OCI-LY7 (cell line): ENCODE measurements at regions of chr3 and their contacts with region 1.

Region 1: GRCh38 chr3:183427876-183428446 is 458 bp downstream of the MCF2L2 start:
- DNase-seq: peak; percentile 70
- H3K4me3 ChIP-seq: peak overlapping the region; percentile 71
- H3K27ac ChIP-seq: peak overlapping the region; percentile 7
- H3K4me1 ChIP-seq: peaks cover 15% of the 10 kb centered on the region
- CTCF ChIP-seq: no peak

Region 2: GRCh38 chr3:182450942-182451787 is 976.8 kb before region 1 on chr3:
- CTCF ChIA-PET with region 1: no interaction called
- POLR2A ChIA-PET with region 1: no interaction called
- intact Hi-C with region 1: no loop called
- DNase-seq: no peak
- H3K4me3 ChIP-seq: no peak overlapping the region
- H3K27ac ChIP-seq: no peak overlapping the region
- H3K4me1 ChIP-seq: peaks cover 9% of the 10 kb centered on the region
- CTCF ChIP-seq: no peak

Region 3: DNA sequence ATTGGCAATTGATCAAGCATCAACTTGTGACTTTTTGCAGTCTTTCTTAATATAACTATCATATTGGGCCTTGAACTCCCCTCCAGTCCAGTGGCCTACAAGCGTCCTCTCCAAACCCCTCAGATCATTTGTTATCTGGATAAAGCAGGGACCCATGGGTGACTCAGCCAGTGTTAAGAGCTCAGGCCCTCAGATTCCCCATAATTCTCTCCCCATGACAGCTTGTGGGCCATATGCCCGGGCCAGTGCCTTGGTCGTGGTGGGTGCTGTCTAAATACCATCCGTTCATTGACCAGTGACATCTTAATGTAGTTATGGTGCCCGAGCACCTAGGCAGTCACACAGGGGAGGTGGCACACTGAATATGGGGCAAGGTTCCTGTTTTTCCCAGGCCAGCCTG is 17.7 kb before region 1 on chr3:
- CTCF ChIA-PET with region 1: interaction called, 8 read pairs
- POLR2A ChIA-PET with region 1: interaction called, 13 read pairs
- intact Hi-C with region 1: no loop called
- DNase-seq: no peak
- H3K4me3 ChIP-seq: no peak overlapping the region
- H3K27ac ChIP-seq: no peak overlapping the region
- H3K4me1 ChIP-seq: no peaks in the 10 kb centered on the region
- CTCF ChIP-seq: no peak

Region 4: GRCh38 chr3:183537295-183537730 is 109.4 kb after region 1 on chr3:
- CTCF ChIA-PET with region 1: no interaction called
- POLR2A ChIA-PET with region 1: no interaction called
- intact Hi-C with region 1: no loop called
- DNase-seq: no peak
- H3K4me3 ChIP-seq: peak overlapping the region; percentile 57
- H3K27ac ChIP-seq: peak overlapping the region; percentile 74
- H3K4me1 ChIP-seq: peaks cover 98% of the 10 kb centered on the region
- CTCF ChIP-seq: no peak

Region 5: DNA sequence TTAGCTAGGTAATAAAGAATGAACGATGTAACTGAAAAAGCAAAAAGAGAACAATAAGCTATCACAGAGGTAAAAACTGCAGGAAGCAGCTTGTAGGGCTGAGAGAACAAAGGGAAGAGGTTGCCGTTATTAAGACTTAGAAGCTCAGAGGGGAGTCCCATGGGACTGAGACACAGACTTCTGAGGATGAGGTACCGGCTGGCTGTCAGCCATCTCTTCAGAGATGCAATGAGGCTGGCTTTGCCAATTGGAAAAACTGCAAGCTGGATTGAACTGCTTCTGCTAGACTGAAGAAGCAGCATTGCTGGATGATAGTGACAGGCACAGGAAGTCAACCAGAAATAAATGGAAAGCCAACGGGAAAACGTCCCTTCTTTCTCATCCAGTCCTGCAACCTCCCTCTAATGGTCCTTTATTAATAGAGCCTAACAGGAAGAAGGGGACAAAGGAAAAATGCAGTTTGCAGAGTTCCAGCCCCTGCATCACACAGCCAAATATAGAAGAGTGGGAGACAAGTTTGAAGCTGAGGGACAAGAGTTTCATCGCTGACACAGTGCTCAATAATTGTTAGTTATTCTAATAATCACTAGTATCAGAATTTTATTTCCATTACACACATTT is 148.6 kb after region 1 on chr3:
- CTCF ChIA-PET with region 1: no interaction called
- POLR2A ChIA-PET with region 1: no interaction called
- intact Hi-C with region 1: no loop called
- DNase-seq: peak; percentile 97
- H3K4me3 ChIP-seq: peak overlapping the region; percentile 47
- H3K27ac ChIP-seq: peak overlapping the region; percentile 94
- H3K4me1 ChIP-seq: peaks cover 96% of the 10 kb centered on the region
- CTCF ChIP-seq: no peak

Region 6: DNA sequence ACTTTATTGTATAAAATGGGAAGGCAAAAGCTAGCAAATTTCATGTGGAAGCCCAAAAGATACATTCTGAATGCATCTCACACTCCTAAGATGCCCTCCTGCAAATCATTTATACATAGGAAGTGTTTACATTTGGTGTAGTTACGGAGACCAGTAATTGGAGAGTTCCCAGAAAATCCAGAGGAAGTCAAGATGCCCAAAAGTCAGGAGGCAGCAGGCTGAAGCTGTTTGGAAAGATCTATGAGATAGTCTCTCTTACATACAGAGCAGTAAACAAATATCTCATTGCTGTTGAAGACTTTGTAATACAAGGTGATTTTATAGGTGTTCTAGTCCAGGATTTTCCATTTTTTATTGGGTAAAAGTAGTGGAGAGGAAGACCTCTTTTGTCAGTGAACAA is 216.3 kb after region 1 on chr3:
- CTCF ChIA-PET with region 1: interaction called, 14 read pairs
- POLR2A ChIA-PET with region 1: no interaction called
- intact Hi-C with region 1: no loop called
- DNase-seq: no peak
- H3K4me3 ChIP-seq: no peak overlapping the region
- H3K27ac ChIP-seq: no peak overlapping the region
- H3K4me1 ChIP-seq: no peaks in the 10 kb centered on the region
- CTCF ChIP-seq: no peak

Region 7: GRCh38 chr3:184362668-184363540 is 934.9 kb after region 1 on chr3:
- CTCF ChIA-PET with region 1: no interaction called
- POLR2A ChIA-PET with region 1: no interaction called
- intact Hi-C with region 1: loop called (anchors 5 kb)
- DNase-seq: peak; percentile 99
- H3K4me3 ChIP-seq: peak overlapping the region; percentile 97
- H3K27ac ChIP-seq: peak overlapping the region; percentile 55
- H3K4me1 ChIP-seq: peaks cover 23% of the 10 kb centered on the region
- CTCF ChIP-seq: peak; percentile 76